Naive thymus-derived CD4-positive, alpha-beta T cell (primary cell): ENCODE measurements at regions of chr9 and their contacts with region 1.

Region 1: GRCh38 chr9:109320742-109321448 is at the start of gene EPB41L4B:
- DNase-seq: peak; percentile 63 to 94 (median 81)
- ATAC-seq: peak; percentile 97
- H3K4me3 ChIP-seq: no peak within 1 kb of the TSS
- H3K4me3 Mint-ChIP-seq: peak within 1 kb of the TSS; percentile 68 to 93 (median 83)
- H3K27ac ChIP-seq: no peak within 1 kb of the TSS
- H3K27ac Mint-ChIP-seq: no peak within 1 kb of the TSS
- H3K4me1 ChIP-seq: peaks cover 0 to 10% of the 10 kb centered on the region in 2 donors
- H3K4me1 Mint-ChIP-seq: peaks cover 5 to 12% (median 10%) of the 10 kb centered on the region in 7 donors
- H3K27me3 ChIP-seq: peaks cover 3 to 4% of the 10 kb centered on the region in 2 donors
- H3K27me3 Mint-ChIP-seq: peaks cover 58 to 77% (median 67%) of the 10 kb centered on the region in 5 donors
- total RNA-seq, gene EPB41L4B: 0.36 TPM in 1 of 5 experiments, not detected in the others

Region 2: GRCh38 chr9:108885643-108886348 is 435.1 kb before region 1 on chr9:
- CTCF ChIA-PET with region 1: no interaction called
- POLR2A ChIA-PET with region 1: no interaction called
- intact Hi-C with region 1: loop called in 1 of 2 experiments (anchors 10 kb)
- DNase-seq: peak in 1 of 9 donors; percentile 39
- ATAC-seq: no peak
- H3K4me3 ChIP-seq: no peak overlapping the region
- H3K4me3 Mint-ChIP-seq: no peak overlapping the region
- H3K27ac ChIP-seq: no peak overlapping the region
- H3K27ac Mint-ChIP-seq: peak overlapping the region in 1 of 9 donors; percentile 7
- H3K4me1 ChIP-seq: no peaks in the 10 kb centered on the region
- H3K4me1 Mint-ChIP-seq: peaks cover 0 to 11% (median 3%) of the 10 kb centered on the region in 7 donors
- H3K27me3 ChIP-seq: no peaks in the 10 kb centered on the region
- H3K27me3 Mint-ChIP-seq: no peaks in the 10 kb centered on the region

Region 3: GRCh38 chr9:108978205-108978604 is 342.7 kb before region 1 on chr9:
- CTCF ChIA-PET with region 1: no interaction called
- POLR2A ChIA-PET with region 1: no interaction called
- intact Hi-C with region 1: no loop called
- DNase-seq: no peak
- ATAC-seq: no peak
- H3K4me3 ChIP-seq: no peak overlapping the region
- H3K4me3 Mint-ChIP-seq: no peak overlapping the region
- H3K27ac ChIP-seq: no peak overlapping the region
- H3K27ac Mint-ChIP-seq: no peak overlapping the region
- H3K4me1 ChIP-seq: no peaks in the 10 kb centered on the region
- H3K4me1 Mint-ChIP-seq: peaks cover 0 to 1% (median 0%) of the 10 kb centered on the region in 7 donors
- H3K27me3 ChIP-seq: no peaks in the 10 kb centered on the region
- H3K27me3 Mint-ChIP-seq: no peaks in the 10 kb centered on the region

Region 4: GRCh38 chr9:109063760-109064159 is 257.1 kb before region 1 on chr9:
- CTCF ChIA-PET with region 1: no interaction called
- POLR2A ChIA-PET with region 1: no interaction called
- intact Hi-C with region 1: loop called in 1 of 2 experiments (anchors 10 kb)
- DNase-seq: no peak
- ATAC-seq: no peak
- H3K4me3 ChIP-seq: no peak overlapping the region
- H3K4me3 Mint-ChIP-seq: no peak overlapping the region
- H3K27ac ChIP-seq: no peak overlapping the region
- H3K27ac Mint-ChIP-seq: peak overlapping the region in 1 of 9 donors; percentile 6
- H3K4me1 ChIP-seq: no peaks in the 10 kb centered on the region
- H3K4me1 Mint-ChIP-seq: peaks cover 0 to 4% (median 0%) of the 10 kb centered on the region in 7 donors
- H3K27me3 ChIP-seq: no peaks in the 10 kb centered on the region
- H3K27me3 Mint-ChIP-seq: no peaks in the 10 kb centered on the region

Region 5: GRCh38 chr9:109244157-109245132 is 76.5 kb before region 1 on chr9:
- CTCF ChIA-PET with region 1: no interaction called
- POLR2A ChIA-PET with region 1: no interaction called
- intact Hi-C with region 1: loop called (anchors 1 kb)
- DNase-seq: peak; percentile 10 to 64 (median 40)
- ATAC-seq: peak; percentile 81
- H3K4me3 ChIP-seq: no peak overlapping the region
- H3K4me3 Mint-ChIP-seq: peak overlapping the region in 1 of 10 donors; percentile 56
- H3K27ac ChIP-seq: no peak overlapping the region
- H3K27ac Mint-ChIP-seq: peak overlapping the region in 1 of 9 donors; percentile 54
- H3K4me1 ChIP-seq: no peaks in the 10 kb centered on the region
- H3K4me1 Mint-ChIP-seq: no peaks in the 10 kb centered on the region
- H3K27me3 ChIP-seq: no peaks in the 10 kb centered on the region
- H3K27me3 Mint-ChIP-seq: peaks cover 22 to 39% (median 27%) of the 10 kb centered on the region in 5 donors

Region 6: GRCh38 chr9:109469646-109470358 is 148.9 kb after region 1 on chr9:
- CTCF ChIA-PET with region 1: no interaction called
- POLR2A ChIA-PET with region 1: no interaction called
- intact Hi-C with region 1: loop called in 1 of 2 experiments (anchors 10 kb)
- DNase-seq: peak in 8 of 9 donors; percentile 11 to 69 (median 24)
- ATAC-seq: peak; percentile 78
- H3K4me3 ChIP-seq: no peak overlapping the region
- H3K4me3 Mint-ChIP-seq: no peak overlapping the region
- H3K27ac ChIP-seq: no peak overlapping the region
- H3K27ac Mint-ChIP-seq: no peak overlapping the region
- H3K4me1 ChIP-seq: no peaks in the 10 kb centered on the region
- H3K4me1 Mint-ChIP-seq: peaks cover 0 to 38% (median 0%) of the 10 kb centered on the region in 7 donors
- H3K27me3 ChIP-seq: no peaks in the 10 kb centered on the region
- H3K27me3 Mint-ChIP-seq: peaks cover 4 to 46% (median 16%) of the 10 kb centered on the region in 5 donors